Natural killer cell (primary cell): ENCODE measurements at regions of chr3 and their contacts with region 1.

Region 1: GRCh38 chr3:102818982-102819381 is 384.2 kb downstream of the ZPLD1 start:
- DNase-seq: no peak
- ATAC-seq: no peak
- H3K4me3 ChIP-seq: no peak overlapping the region
- H3K4me3 Mint-ChIP-seq: no peak overlapping the region
- H3K27ac ChIP-seq: no peak overlapping the region
- H3K27ac Mint-ChIP-seq: no peak overlapping the region
- H3K4me1 ChIP-seq: no peaks in the 10 kb centered on the region
- H3K4me1 Mint-ChIP-seq: no peaks in the 10 kb centered on the region
- H3K27me3 ChIP-seq: no peaks in the 10 kb centered on the region
- H3K27me3 Mint-ChIP-seq: peaks cover 0 to 6% of the 10 kb centered on the region in 2 donors
- CTCF ChIP-seq: no peak

Region 2: GRCh38 chr3:102796804-102797203 is 22.2 kb before region 1 on chr3:
- intact Hi-C with region 1: loop called (anchors 1 kb)
- DNase-seq: no peak
- ATAC-seq: no peak
- H3K4me3 ChIP-seq: no peak overlapping the region
- H3K4me3 Mint-ChIP-seq: no peak overlapping the region
- H3K27ac ChIP-seq: no peak overlapping the region
- H3K27ac Mint-ChIP-seq: no peak overlapping the region
- H3K4me1 ChIP-seq: no peaks in the 10 kb centered on the region
- H3K4me1 Mint-ChIP-seq: no peaks in the 10 kb centered on the region
- H3K27me3 ChIP-seq: no peaks in the 10 kb centered on the region
- H3K27me3 Mint-ChIP-seq: no peaks in the 10 kb centered on the region
- CTCF ChIP-seq: no peak